IMR-90 (cell line): ENCODE measurements at regions of chr16 and their contacts with region 1.

Region 1: GRCh38 chr16:27449434-27450195 is 47.6 kb downstream of the IL21R start:
- DNase-seq: no peak
- ATAC-seq: no peak
- H3K4me3 ChIP-seq: no peak overlapping the region
- H3K27ac ChIP-seq: no peak overlapping the region
- H3K4me1 ChIP-seq: peaks cover 5% of the 10 kb centered on the region
- H3K27me3 ChIP-seq: no peaks in the 10 kb centered on the region
- CTCF ChIP-seq: no peak
- POLR2A ChIP-seq: no peak
- RAD21 ChIP-seq: no peak

Region 2: DNA sequence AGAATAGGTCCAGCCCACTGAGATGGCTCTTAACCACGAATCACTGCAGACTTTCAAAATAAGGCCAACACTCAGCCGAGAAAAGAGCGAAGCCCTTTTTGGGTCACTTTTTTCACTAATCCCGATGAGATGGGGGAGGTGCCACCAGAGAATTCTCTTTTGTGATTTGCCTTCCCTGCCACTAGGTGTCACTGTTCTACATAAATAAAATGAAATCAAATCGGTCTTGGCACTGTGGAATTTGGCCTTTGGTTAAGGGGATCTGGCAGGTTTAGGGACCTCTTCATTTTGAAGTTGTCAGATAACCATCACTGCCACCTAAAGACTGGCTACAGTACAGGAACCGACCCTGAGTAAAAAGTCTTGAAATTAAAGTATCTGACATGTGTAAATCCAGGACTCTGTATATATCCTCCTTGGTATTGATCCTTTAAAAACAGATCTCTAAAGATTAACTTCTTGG is 1610.9 kb before region 1 on chr16:
- CTCF ChIA-PET with region 1: no interaction called
- POLR2A ChIA-PET with region 1: no interaction called
- dilution Hi-C with region 1: no loop called
- in situ Hi-C with region 1: loop called (anchors 25 kb)
- intact Hi-C with region 1: no loop called
- DNase-seq: peak; percentile 41
- ATAC-seq: peak; percentile 68
- H3K4me3 ChIP-seq: no peak overlapping the region
- H3K27ac ChIP-seq: no peak overlapping the region
- H3K4me1 ChIP-seq: no peaks in the 10 kb centered on the region
- H3K27me3 ChIP-seq: no peaks in the 10 kb centered on the region
- CTCF ChIP-seq: peak; percentile 75
- POLR2A ChIP-seq: no peak
- RAD21 ChIP-seq: peak; percentile 58

Region 3: GRCh38 chr16:27154705-27155521 is 294.7 kb before region 1 on chr16:
- CTCF ChIA-PET with region 1: no interaction called
- POLR2A ChIA-PET with region 1: no interaction called
- dilution Hi-C with region 1: no loop called
- in situ Hi-C with region 1: loop called (anchors 10 kb)
- intact Hi-C with region 1: no loop called
- DNase-seq: peak; percentile 21
- ATAC-seq: peak; percentile 94
- H3K4me3 ChIP-seq: no peak overlapping the region
- H3K27ac ChIP-seq: no peak overlapping the region
- H3K4me1 ChIP-seq: 0 out of 2 replicates have a peak, but pooled peaks cover 1% of the 10 kb centered on the region
- H3K27me3 ChIP-seq: no peaks in the 10 kb centered on the region
- CTCF ChIP-seq: peak; percentile 88
- POLR2A ChIP-seq: no peak
- RAD21 ChIP-seq: peak; percentile 77

Region 4: DNA sequence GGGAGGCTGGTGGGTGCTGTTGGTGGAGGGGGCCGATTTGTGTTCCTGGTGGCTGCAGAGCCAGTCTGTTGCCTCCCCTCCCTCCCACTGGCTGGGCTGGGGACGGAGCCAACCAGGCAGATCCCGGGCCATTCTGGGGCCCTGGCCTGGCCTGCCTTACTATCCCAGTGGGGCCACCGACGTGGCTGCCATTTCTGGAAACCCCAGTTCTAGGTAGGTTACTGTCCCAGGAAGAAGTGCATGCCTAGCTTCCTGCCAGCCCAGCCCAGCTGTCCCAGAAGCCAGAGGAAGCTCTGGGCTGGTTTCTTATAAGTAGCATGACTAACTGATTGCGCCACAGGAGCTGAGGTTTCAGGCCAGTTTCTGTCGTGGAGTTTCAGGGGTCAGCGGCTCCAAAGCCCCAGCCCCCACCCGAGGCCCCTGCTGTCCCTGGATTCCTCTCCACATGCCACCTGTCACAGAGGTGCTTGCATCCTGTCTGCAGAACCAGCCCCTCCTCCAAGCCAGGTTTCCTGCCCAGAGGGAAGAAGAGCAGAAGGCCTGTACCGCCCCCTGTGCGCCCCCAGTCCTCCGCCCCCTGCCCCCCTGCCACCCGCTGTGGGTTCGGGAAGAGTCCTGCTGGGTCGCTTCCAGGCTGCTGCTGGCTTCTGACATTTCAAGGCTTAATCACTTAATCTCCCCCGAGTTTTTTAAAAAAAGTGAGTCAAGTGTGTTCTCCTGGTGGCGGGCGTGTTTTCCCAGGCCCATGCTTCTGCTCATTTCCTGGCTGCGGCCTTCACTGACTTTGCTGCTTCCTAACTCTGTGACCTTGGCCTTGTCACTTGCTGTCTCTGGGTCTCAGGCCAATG is 122.7 kb before region 1 on chr16:
- CTCF ChIA-PET with region 1: no interaction called
- POLR2A ChIA-PET with region 1: no interaction called
- dilution Hi-C with region 1: no loop called
- in situ Hi-C with region 1: no loop called
- intact Hi-C with region 1: no loop called
- DNase-seq: peak; percentile 97
- ATAC-seq: peak; percentile 73
- H3K4me3 ChIP-seq: no peak overlapping the region
- H3K27ac ChIP-seq: peak overlapping the region; percentile 91
- H3K4me1 ChIP-seq: peaks cover 26% of the 10 kb centered on the region
- H3K27me3 ChIP-seq: no peaks in the 10 kb centered on the region
- CTCF ChIP-seq: no peak
- POLR2A ChIP-seq: peak; percentile 61
- RAD21 ChIP-seq: peak; percentile 27; the same call in 1 of the 2 replicates

Region 5: GRCh38 chr16:27374804-27375425 is 74.7 kb before region 1 on chr16:
- CTCF ChIA-PET with region 1: no interaction called
- POLR2A ChIA-PET with region 1: no interaction called
- dilution Hi-C with region 1: no loop called
- in situ Hi-C with region 1: loop called (anchors 5 kb)
- intact Hi-C with region 1: no loop called
- DNase-seq: peak; percentile 80
- ATAC-seq: peak; percentile 93
- H3K4me3 ChIP-seq: no peak overlapping the region
- H3K27ac ChIP-seq: no peak overlapping the region
- H3K4me1 ChIP-seq: peaks cover 11% of the 10 kb centered on the region
- H3K27me3 ChIP-seq: no peaks in the 10 kb centered on the region
- CTCF ChIP-seq: peak; percentile 59
- POLR2A ChIP-seq: no peak
- RAD21 ChIP-seq: peak; percentile 62